ENCODE measurements at regions of chr1 and their contacts with region 1.

Region 1: GRCh38 chr1:175319418-175320230 is 127.0 kb upstream of the KIAA0040 start:
- DNase-seq: peak; percentile 54 to 66 (median 63)
- H3K4me3 ChIP-seq: no peak overlapping the region
- H3K4me3 Mint-ChIP-seq: peak overlapping the region in 1 of 8 donors; percentile 45
- H3K27ac ChIP-seq: no peak overlapping the region
- H3K27ac Mint-ChIP-seq: peak overlapping the region in 1 of 7 donors; percentile 61
- H3K4me1 ChIP-seq: peaks cover 5% of the 10 kb centered on the region
- H3K4me1 Mint-ChIP-seq: peaks cover 5 to 18% (median 9%) of the 10 kb centered on the region in 4 donors
- H3K27me3 ChIP-seq: peaks cover 6% of the 10 kb centered on the region
- H3K27me3 Mint-ChIP-seq: peaks cover 5 to 7% of the 10 kb centered on the region in 2 donors

Region 2: DNA sequence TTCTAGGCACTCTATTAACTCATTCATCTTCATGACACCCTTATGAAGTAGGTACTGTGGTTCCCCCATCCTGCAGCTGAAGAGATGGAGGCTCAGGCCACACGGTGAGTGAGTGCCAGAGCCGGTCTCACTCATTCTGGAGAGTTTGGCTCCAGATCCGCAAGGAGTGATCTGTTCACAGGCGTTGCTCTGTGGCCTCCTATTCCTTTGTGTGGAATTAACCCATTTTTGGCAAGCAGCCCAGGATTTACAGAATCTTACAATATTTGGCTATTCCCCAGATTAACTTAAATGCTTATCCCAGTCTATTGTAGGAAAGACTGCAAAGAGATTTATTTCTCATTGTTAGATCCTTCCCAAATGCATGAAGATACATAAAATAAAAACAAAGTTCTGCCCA is 156.7 kb before region 1 on chr1:
- CTCF ChIA-PET with region 1: interaction called, 417 read pairs
- POLR2A ChIA-PET with region 1: no interaction called
- intact Hi-C with region 1: no loop called
- DNase-seq: no peak
- H3K4me3 ChIP-seq: no peak overlapping the region
- H3K4me3 Mint-ChIP-seq: no peak overlapping the region
- H3K27ac ChIP-seq: no peak overlapping the region
- H3K27ac Mint-ChIP-seq: peak overlapping the region in 3 of 7 donors; percentile 37 to 74 (median 49)
- H3K4me1 ChIP-seq: no peaks in the 10 kb centered on the region
- H3K4me1 Mint-ChIP-seq: peaks cover 13 to 28% (median 14%) of the 10 kb centered on the region in 4 donors
- H3K27me3 ChIP-seq: no peaks in the 10 kb centered on the region
- H3K27me3 Mint-ChIP-seq: no peaks in the 10 kb centered on the region

Region 3: DNA sequence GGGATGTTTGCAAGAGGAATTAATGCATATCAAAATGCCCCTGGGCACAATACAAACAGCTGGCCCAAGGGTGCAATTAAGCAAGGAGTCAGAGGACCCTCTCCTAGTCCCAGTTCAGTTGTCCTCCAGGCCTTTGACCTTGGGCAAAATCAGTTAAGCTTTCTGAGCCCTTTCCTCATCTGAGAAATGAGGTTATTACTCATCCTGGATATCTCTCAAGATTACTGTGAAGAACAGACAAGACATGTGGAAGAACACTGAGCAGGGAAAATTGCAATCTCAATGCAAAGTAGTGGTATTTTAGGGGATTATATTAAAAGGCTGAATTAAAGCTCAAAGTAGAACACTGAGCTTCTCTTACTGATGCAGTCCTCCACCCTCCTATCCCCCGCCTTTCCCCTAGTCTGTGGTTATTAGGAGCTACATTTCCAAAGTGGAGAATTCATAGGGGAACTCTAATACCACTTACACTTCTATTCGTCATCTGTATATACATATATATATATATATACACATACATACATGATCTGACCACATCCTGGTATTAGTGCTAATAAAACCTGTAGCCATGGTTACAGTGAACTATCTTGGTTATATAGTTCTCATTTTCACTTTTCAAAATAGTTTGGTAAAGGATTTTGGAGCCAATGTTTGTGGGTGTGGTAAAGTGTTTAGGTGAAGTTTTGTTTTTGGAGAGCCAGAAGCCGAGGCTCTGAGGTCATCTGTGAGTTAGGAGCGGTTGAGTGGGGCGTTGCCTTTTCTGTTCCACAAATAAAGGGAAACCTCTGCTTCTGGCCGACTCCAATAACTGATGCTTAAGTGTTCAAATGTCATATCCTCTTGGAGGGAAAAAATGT is 145.1 kb before region 1 on chr1:
- CTCF ChIA-PET with region 1: interaction called, 22 read pairs
- POLR2A ChIA-PET with region 1: no interaction called
- intact Hi-C with region 1: no loop called
- DNase-seq: peak in 3 of 5 donors; percentile 18 to 35 (median 22)
- H3K4me3 ChIP-seq: no peak overlapping the region
- H3K4me3 Mint-ChIP-seq: peak overlapping the region in 5 of 8 donors; percentile 8 to 65 (median 45)
- H3K27ac ChIP-seq: no peak overlapping the region
- H3K27ac Mint-ChIP-seq: peak overlapping the region; percentile 42 to 89 (median 84)
- H3K4me1 ChIP-seq: peaks cover 50% of the 10 kb centered on the region
- H3K4me1 Mint-ChIP-seq: peaks cover 60 to 87% (median 74%) of the 10 kb centered on the region in 4 donors
- H3K27me3 ChIP-seq: no peaks in the 10 kb centered on the region
- H3K27me3 Mint-ChIP-seq: no peaks in the 10 kb centered on the region

Region 4: DNA sequence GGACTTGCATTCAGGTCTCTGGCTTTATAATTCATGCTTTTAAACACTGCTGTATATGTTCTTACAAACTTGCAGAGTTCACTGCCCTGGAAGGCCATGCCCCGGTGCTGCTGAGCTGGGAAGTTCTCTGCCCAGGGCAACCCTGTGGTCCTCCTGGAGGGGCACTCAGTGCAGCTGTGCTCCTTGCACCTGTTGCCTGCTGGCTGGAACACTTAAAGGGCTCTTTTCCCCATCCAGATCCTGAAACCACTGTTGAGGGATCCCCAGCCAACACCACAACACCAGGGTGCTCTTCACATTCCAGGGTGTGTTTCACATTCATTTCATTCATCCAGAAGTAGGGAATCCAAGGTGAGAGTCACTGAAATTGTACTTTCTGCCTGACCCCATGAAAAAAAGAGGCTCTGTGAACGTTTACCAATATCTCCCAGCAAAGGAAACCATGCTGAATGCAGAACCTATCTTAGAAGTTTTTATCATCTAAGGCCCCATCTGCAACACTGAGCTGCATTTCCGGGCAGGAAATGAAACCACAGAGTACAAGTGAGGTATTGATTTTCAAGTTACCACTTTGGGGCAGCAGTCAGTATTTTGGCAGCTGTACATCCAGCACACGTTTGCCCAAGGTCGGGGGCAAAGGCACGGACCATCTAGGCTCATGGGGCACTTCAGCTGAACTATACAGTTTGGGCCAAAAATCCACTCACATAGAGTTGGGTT is 110.7 kb before region 1 on chr1:
- CTCF ChIA-PET with region 1: interaction called, 36 read pairs
- POLR2A ChIA-PET with region 1: no interaction called
- intact Hi-C with region 1: loop called (anchors 1 kb)
- DNase-seq: peak; percentile 76 to 83 (median 80)
- H3K4me3 ChIP-seq: peak overlapping the region in 1 of 2 donors; percentile 8
- H3K4me3 Mint-ChIP-seq: peak overlapping the region; percentile 80 to 93 (median 90)
- H3K27ac ChIP-seq: peak overlapping the region; percentile 55
- H3K27ac Mint-ChIP-seq: peak overlapping the region; percentile 90 to 98 (median 96)
- H3K4me1 ChIP-seq: peaks cover 73% of the 10 kb centered on the region
- H3K4me1 Mint-ChIP-seq: peaks cover 59 to 84% (median 71%) of the 10 kb centered on the region in 4 donors
- H3K27me3 ChIP-seq: no peaks in the 10 kb centered on the region
- H3K27me3 Mint-ChIP-seq: no peaks in the 10 kb centered on the region

Region 5: GRCh38 chr1:175307160-175307559 is 12.5 kb before region 1 on chr1:
- CTCF ChIA-PET with region 1: interaction called, 38 read pairs
- POLR2A ChIA-PET with region 1: no interaction called
- intact Hi-C with region 1: no loop called
- DNase-seq: no peak
- H3K4me3 ChIP-seq: no peak overlapping the region
- H3K4me3 Mint-ChIP-seq: no peak overlapping the region
- H3K27ac ChIP-seq: no peak overlapping the region
- H3K27ac Mint-ChIP-seq: no peak overlapping the region
- H3K4me1 ChIP-seq: no peaks in the 10 kb centered on the region
- H3K4me1 Mint-ChIP-seq: no peaks in the 10 kb centered on the region
- H3K27me3 ChIP-seq: no peaks in the 10 kb centered on the region
- H3K27me3 Mint-ChIP-seq: peaks cover 1 to 8% of the 10 kb centered on the region in 2 donors

Region 6: DNA sequence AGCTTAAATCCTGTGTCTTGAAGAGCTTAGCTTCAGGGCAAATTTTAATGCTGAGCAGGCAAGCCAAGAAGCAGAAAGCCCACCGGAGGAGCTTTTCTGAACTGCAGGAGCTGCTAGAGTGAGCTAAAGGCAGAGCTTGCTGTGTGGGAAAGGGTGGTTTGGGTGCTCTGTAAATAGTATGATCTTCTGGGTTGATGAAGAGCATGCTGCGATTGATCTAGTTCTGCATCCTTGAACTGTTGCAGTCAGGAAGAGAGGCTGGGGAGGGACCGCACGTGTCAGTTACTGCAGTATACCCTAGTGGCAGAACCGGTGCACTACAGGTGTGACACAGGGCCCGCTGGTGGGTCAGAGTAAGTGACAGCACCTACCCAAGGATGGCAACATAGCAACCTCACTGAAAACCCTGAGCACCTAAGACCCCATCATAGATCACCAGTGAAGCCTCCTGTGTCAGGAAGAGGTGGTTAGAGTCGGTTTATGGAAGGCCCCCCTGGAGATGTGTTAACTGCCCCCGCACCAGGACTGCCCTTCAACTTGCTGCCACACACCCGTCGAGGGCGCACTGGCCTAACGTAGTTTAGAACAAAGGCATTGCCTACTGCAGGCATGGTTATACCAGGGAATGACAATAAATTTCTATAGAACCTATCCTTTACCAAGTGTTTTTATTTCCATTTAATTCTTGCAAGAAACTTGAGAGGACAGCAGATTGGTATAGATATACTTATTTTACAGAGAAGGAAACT is 18.9 kb after region 1 on chr1:
- CTCF ChIA-PET with region 1: interaction called, 28 read pairs
- POLR2A ChIA-PET with region 1: interaction called, 3 read pairs
- intact Hi-C with region 1: no loop called
- DNase-seq: peak; percentile 27 to 61 (median 45)
- H3K4me3 ChIP-seq: no peak overlapping the region
- H3K4me3 Mint-ChIP-seq: no peak overlapping the region
- H3K27ac ChIP-seq: no peak overlapping the region
- H3K27ac Mint-ChIP-seq: no peak overlapping the region
- H3K4me1 ChIP-seq: no peaks in the 10 kb centered on the region
- H3K4me1 Mint-ChIP-seq: peaks cover 0 to 6% (median 4%) of the 10 kb centered on the region in 4 donors
- H3K27me3 ChIP-seq: no peaks in the 10 kb centered on the region
- H3K27me3 Mint-ChIP-seq: peaks cover 18 to 26% of the 10 kb centered on the region in 2 donors

Measured in CD4-positive, alpha-beta memory T cell (primary cell).